ENCODE measurements at regions of chr7 and their contacts with region 1.

Region 1: GRCh38 chr7:12686894-12687717 is at the start of gene ARL4A:
- DNase-seq: peak; percentile 94
- H3K4me3 Mint-ChIP-seq: peak within 1 kb of the TSS; percentile 98
- H3K27ac Mint-ChIP-seq: peak within 1 kb of the TSS; percentile 91
- H3K4me1 Mint-ChIP-seq: peaks cover 47% of the 10 kb centered on the region
- H3K27me3 Mint-ChIP-seq: no peaks in the 10 kb centered on the region
- total RNA-seq, gene ARL4A: 19.1 to 19.8 TPM

Region 2: DNA sequence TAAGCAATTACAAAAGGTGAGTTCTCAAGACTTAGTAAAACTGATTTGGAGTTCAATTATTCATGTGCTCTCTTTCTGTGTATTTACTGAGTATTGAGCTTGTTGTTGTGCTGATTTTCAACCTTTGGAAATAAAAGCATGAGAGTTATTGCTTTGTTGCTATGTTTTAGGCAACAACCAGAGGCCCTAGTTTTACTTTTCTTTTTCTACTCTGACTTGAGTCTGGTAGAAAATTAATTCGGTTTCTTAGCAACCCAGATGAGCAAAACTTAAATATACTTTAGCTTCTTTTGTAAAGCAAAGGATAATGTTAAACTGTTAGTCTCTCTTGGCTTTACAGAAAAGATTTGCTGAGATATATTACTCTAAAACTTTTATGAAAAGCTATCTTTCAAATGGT is 183.0 kb before region 1 on chr7:
- CTCF ChIA-PET with region 1: no interaction called
- POLR2A ChIA-PET with region 1: no interaction called
- DNase-seq: no peak
- H3K4me3 Mint-ChIP-seq: no peak overlapping the region
- H3K27ac Mint-ChIP-seq: no peak overlapping the region
- H3K4me1 Mint-ChIP-seq: no peaks in the 10 kb centered on the region
- H3K27me3 Mint-ChIP-seq: peaks cover under 1% of the 10 kb centered on the region

Region 3: DNA sequence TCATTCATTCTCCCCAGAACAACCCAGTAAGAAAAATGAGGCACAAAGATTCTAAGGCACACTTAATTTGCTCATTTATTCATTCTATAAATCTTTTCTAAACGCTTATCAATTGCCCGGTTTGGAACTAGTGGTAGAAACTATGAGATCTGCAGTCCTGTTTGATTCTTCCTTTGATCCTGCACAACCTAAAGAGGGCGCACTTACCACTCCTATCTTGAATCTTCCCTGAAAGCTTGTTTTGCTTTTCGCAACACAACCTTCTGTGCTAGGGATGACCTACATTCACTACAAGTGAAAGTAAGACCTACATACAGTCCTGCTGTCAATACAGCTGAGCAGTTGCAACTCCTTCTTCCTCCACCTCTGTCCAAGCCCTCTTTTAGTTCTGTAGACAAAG is 12.3 kb before region 1 on chr7:
- CTCF ChIA-PET with region 1: interaction called, 20 read pairs
- POLR2A ChIA-PET with region 1: interaction called, 5 read pairs
- DNase-seq: peak; percentile 44
- H3K4me3 Mint-ChIP-seq: no peak overlapping the region
- H3K27ac Mint-ChIP-seq: no peak overlapping the region
- H3K4me1 Mint-ChIP-seq: peaks cover 10% of the 10 kb centered on the region
- H3K27me3 Mint-ChIP-seq: no peaks in the 10 kb centered on the region

Region 4: GRCh38 chr7:12715372-12716133 is 28.4 kb after region 1 on chr7:
- CTCF ChIA-PET with region 1: interaction called, 20 read pairs
- POLR2A ChIA-PET with region 1: interaction called, 18 read pairs
- DNase-seq: peak; percentile 55
- H3K4me3 Mint-ChIP-seq: no peak overlapping the region
- H3K27ac Mint-ChIP-seq: peak overlapping the region; percentile 76
- H3K4me1 Mint-ChIP-seq: peaks cover 44% of the 10 kb centered on the region
- H3K27me3 Mint-ChIP-seq: no peaks in the 10 kb centered on the region

Region 5: DNA sequence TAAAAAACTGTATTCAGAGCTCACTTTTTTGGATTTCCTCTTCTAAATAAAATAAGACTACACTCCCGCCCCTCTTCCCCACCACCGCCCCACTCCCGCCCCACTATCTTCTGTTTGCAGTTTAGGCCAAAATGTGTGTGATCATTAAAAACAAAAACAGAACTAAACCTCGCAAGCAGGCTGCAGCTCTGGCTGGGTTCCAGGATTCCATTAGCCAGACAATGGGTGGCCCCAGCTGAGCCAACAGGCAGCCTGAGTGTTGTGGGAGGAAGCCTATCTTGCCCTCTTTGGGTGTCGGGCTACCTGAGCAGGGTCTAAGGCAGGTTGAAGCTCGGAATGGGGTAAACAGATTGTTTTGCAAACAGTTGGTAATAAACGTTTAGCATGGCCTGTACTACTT is 42.0 kb after region 1 on chr7:
- CTCF ChIA-PET with region 1: interaction called, 69 read pairs
- POLR2A ChIA-PET with region 1: interaction called, 46 read pairs
- DNase-seq: no peak
- H3K4me3 Mint-ChIP-seq: no peak overlapping the region
- H3K27ac Mint-ChIP-seq: no peak overlapping the region
- H3K4me1 Mint-ChIP-seq: peaks cover 27% of the 10 kb centered on the region
- H3K27me3 Mint-ChIP-seq: no peaks in the 10 kb centered on the region

Region 6: DNA sequence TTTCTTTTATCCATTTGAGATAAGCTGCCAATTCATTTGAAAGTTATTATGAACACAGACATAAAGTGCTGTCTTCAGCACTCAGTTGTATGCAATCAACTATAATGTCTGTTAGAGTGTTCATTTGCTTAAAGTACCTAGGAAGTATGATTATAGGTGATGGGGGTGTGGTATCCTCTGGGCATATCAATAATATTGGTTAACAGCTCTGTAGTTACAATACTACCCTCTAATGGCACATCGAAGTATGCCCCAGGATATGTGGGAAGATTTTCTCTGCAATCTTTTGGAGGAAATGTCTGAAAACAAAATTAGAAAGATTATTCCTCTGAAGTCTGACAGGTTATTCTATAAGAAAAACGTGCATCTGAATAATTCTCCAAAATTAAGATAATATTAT is 430.0 kb after region 1 on chr7:
- CTCF ChIA-PET with region 1: interaction called, 10 read pairs
- POLR2A ChIA-PET with region 1: no interaction called
- DNase-seq: no peak
- H3K4me3 Mint-ChIP-seq: no peak overlapping the region
- H3K27ac Mint-ChIP-seq: no peak overlapping the region
- H3K4me1 Mint-ChIP-seq: peaks cover 3% of the 10 kb centered on the region
- H3K27me3 Mint-ChIP-seq: peaks cover 6% of the 10 kb centered on the region